GM12878 (cell line): ENCODE measurements at regions of chr9 and their contacts with region 1.

Region 1: GRCh38 chr9:28951944-28952343 is 1378.7 kb upstream of the C9orf72 start:
- DNase-seq: no peak
- ATAC-seq: peak; percentile 78
- H3K4me3 ChIP-seq: no peak overlapping the region
- H3K27ac ChIP-seq: no peak overlapping the region
- H3K4me1 ChIP-seq: no peaks in the 10 kb centered on the region
- H3K27me3 ChIP-seq: no peaks in the 10 kb centered on the region
- CTCF ChIP-seq: peak; percentile 12 to 37 (median 35); a peak in 4 of 6 replicates
- EP300 ChIP-seq: no peak
- POLR2A ChIP-seq: no peak
- RAD21 ChIP-seq: peak; percentile 25; the same call in 1 of the 2 replicates

Region 2: GRCh38 chr9:28848671-28849070 is 103.3 kb before region 1 on chr9:
- CTCF ChIA-PET with region 1: no interaction called
- POLR2A ChIA-PET with region 1: no interaction called
- RAD21 ChIA-PET with region 1: no interaction called
- SMC1A ChIA-PET with region 1: no interaction called
- in situ Hi-C with region 1: no loop called
- intact Hi-C with region 1: no loop called
- DNase-seq: no peak
- ATAC-seq: no peak
- H3K4me3 ChIP-seq: no peak overlapping the region
- H3K27ac ChIP-seq: no peak overlapping the region
- H3K4me1 ChIP-seq: no peaks in the 10 kb centered on the region
- H3K27me3 ChIP-seq: no peaks in the 10 kb centered on the region
- CTCF ChIP-seq: no peak
- EP300 ChIP-seq: no peak
- POLR2A ChIP-seq: no peak
- RAD21 ChIP-seq: no peak

Region 3: GRCh38 chr9:28915256-28915930 is 36.6 kb before region 1 on chr9:
- CTCF ChIA-PET with region 1: no interaction called
- POLR2A ChIA-PET with region 1: no interaction called
- RAD21 ChIA-PET with region 1: no interaction called
- SMC1A ChIA-PET with region 1: no interaction called
- in situ Hi-C with region 1: no loop called
- intact Hi-C with region 1: no loop called
- DNase-seq: no peak
- ATAC-seq: no peak; the same call in 2 of the 3 replicates
- H3K4me3 ChIP-seq: no peak overlapping the region
- H3K27ac ChIP-seq: no peak overlapping the region
- H3K4me1 ChIP-seq: no peaks in the 10 kb centered on the region
- H3K27me3 ChIP-seq: no peaks in the 10 kb centered on the region
- CTCF ChIP-seq: no peak
- EP300 ChIP-seq: no peak
- POLR2A ChIP-seq: no peak
- RAD21 ChIP-seq: no peak

Region 4: DNA sequence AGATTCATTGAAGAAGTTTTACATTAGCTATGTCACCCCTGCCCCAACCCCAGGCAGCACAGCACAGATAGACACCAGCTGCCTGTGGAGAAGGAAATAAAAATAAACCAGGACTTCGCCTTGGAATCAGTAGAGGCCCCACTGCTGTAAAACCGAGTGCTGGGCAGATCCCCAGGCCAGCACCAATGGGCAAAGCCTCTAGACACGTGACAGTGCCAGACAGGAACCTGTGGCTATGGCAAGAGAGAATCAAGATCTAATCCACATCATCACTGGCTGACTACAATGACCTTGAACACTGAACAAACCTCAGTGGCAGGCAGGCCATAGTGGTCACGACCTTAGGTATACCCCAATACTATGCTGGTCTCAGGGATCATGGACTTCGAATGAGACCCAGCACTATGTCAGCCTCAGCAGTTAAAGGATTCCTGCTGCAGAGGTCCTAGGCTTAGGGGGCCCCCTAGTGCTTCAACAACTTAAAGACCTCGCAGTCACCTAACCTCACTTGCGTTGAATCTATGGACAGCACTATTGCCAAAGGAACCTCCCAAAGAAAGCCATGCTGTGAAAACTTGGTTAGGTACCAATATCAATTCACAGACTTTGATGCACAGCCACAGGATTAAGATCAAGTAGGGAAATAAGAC is 739.9 kb after region 1 on chr9:
- CTCF ChIA-PET with region 1: interaction called, 4 read pairs
- POLR2A ChIA-PET with region 1: no interaction called
- RAD21 ChIA-PET with region 1: no interaction called
- SMC1A ChIA-PET with region 1: interaction called, 3 read pairs
- in situ Hi-C with region 1: no loop called
- intact Hi-C with region 1: loop called (anchors 5 kb)
- DNase-seq: no peak
- ATAC-seq: peak; percentile 94
- H3K4me3 ChIP-seq: no peak overlapping the region
- H3K27ac ChIP-seq: no peak overlapping the region
- H3K4me1 ChIP-seq: no peaks in the 10 kb centered on the region
- H3K27me3 ChIP-seq: no peaks in the 10 kb centered on the region
- CTCF ChIP-seq: peak; percentile 14 to 46 (median 44); a peak in 3 of 6 replicates
- EP300 ChIP-seq: no peak
- POLR2A ChIP-seq: no peak
- RAD21 ChIP-seq: peak; percentile 42